CD4-positive, alpha-beta T cell (primary cell): ENCODE measurements at regions of chr7 and their contacts with region 1.

Region 1: GRCh38 chr7:39633563-39634477 is 10.4 kb downstream of the RALA start:
- DNase-seq: peak in 12 of 14 experiments; percentile 17 to 77 (median 32)
- ATAC-seq: peak; percentile 88
- H3K4me3 ChIP-seq: peak overlapping the region; percentile 6
- H3K4me3 Mint-ChIP-seq: peak overlapping the region; percentile 74
- H3K27ac ChIP-seq: peak overlapping the region; percentile 71 to 80
- H3K27ac Mint-ChIP-seq: peak overlapping the region; percentile 96
- H3K4me1 ChIP-seq: peaks cover 35% of the 10 kb centered on the region
- H3K4me1 Mint-ChIP-seq: peaks cover 74% of the 10 kb centered on the region
- H3K27me3 ChIP-seq: no peaks in the 10 kb centered on the region
- H3K27me3 Mint-ChIP-seq: no peaks in the 10 kb centered on the region
- CTCF ChIP-seq: no peak

Region 2: GRCh38 chr7:38615665-38616064 is 1018.2 kb before region 1 on chr7:
- CTCF ChIA-PET with region 1: no interaction called
- POLR2A ChIA-PET with region 1: no interaction called
- intact Hi-C with region 1: no loop called
- DNase-seq: no peak
- ATAC-seq: no peak
- H3K4me3 ChIP-seq: no peak overlapping the region
- H3K4me3 Mint-ChIP-seq: no peak overlapping the region
- H3K27ac ChIP-seq: no peak overlapping the region
- H3K27ac Mint-ChIP-seq: no peak overlapping the region
- H3K4me1 ChIP-seq: no peaks in the 10 kb centered on the region
- H3K4me1 Mint-ChIP-seq: no peaks in the 10 kb centered on the region
- H3K27me3 ChIP-seq: peaks cover 0 to 5% of the 10 kb centered on the region in 2 experiments
- H3K27me3 Mint-ChIP-seq: peaks cover 14% of the 10 kb centered on the region
- CTCF ChIP-seq: no peak

Region 3: GRCh38 chr7:39589323-39590111 is 44.3 kb before region 1 on chr7:
- CTCF ChIA-PET with region 1: no interaction called
- POLR2A ChIA-PET with region 1: no interaction called
- intact Hi-C with region 1: loop called in 1 of 2 experiments (anchors 2 kb)
- DNase-seq: peak in 13 of 14 experiments; percentile 24 to 89 (median 46)
- ATAC-seq: peak; percentile 82
- H3K4me3 ChIP-seq: no peak overlapping the region
- H3K4me3 Mint-ChIP-seq: peak overlapping the region; percentile 2
- H3K27ac ChIP-seq: no peak overlapping the region
- H3K27ac Mint-ChIP-seq: peak overlapping the region; percentile 52
- H3K4me1 ChIP-seq: peaks cover 12% of the 10 kb centered on the region
- H3K4me1 Mint-ChIP-seq: peaks cover 27% of the 10 kb centered on the region
- H3K27me3 ChIP-seq: no peaks in the 10 kb centered on the region
- H3K27me3 Mint-ChIP-seq: no peaks in the 10 kb centered on the region
- CTCF ChIP-seq: no peak

Region 4: DNA sequence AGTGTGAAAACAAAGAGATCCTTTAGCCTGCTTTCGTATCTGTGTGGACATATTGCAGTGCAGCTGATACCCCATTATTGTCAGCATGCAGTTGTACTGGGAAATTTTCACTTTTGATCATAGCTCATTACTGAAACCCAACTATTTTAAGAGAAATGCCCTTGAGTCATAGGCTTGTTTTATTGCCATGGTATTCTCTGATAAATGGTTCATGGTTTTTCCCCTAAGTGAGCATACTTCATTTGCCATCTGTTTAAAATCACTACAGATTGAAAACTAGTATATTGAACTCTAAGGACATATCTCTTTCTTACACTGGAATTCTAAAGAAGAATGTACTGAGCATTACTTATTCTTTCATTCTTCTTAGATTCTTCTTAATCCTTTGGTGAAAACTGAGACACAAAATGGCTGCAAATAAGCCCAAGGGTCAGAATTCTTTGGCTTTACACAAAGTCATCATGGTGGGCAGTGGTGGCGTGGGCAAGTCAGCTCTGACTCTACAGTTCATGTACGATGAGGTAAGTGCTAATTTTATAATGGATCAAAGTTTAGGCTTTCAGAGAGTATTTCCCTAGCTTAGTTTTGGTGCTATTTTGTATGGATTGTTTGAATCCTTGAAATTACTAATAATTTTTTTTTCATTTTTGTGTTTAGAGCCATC is 52.6 kb after region 1 on chr7:
- CTCF ChIA-PET with region 1: no interaction called
- POLR2A ChIA-PET with region 1: no interaction called
- intact Hi-C with region 1: loop called in 1 of 2 experiments (anchors 10 kb)
- DNase-seq: no peak
- ATAC-seq: no peak
- H3K4me3 ChIP-seq: no peak overlapping the region
- H3K4me3 Mint-ChIP-seq: no peak overlapping the region
- H3K27ac ChIP-seq: no peak overlapping the region
- H3K27ac Mint-ChIP-seq: no peak overlapping the region
- H3K4me1 ChIP-seq: peaks cover 2% of the 10 kb centered on the region
- H3K4me1 Mint-ChIP-seq: peaks cover 34% of the 10 kb centered on the region
- H3K27me3 ChIP-seq: no peaks in the 10 kb centered on the region
- H3K27me3 Mint-ChIP-seq: no peaks in the 10 kb centered on the region
- CTCF ChIP-seq: no peak